Activated CD4-positive, alpha-beta T cell treated with anti-CD3 and anti-CD28 coated beads, Interleukin-2, amount 10 ng/mL, durations not matched to agents 7 days and 5 days (primary cell): ENCODE measurements at regions of chr14 and their contacts with region 1.

Region 1: GRCh38 chr14:22556990-22557623 is 31.9 kb downstream of the DAD1 start:
- DNase-seq: peak; percentile 89
- H3K4me3 Mint-ChIP-seq: peak overlapping the region; percentile 75
- H3K27ac Mint-ChIP-seq: peak overlapping the region; percentile 94
- H3K4me1 Mint-ChIP-seq: peaks cover 86% of the 10 kb centered on the region
- H3K27me3 Mint-ChIP-seq: peaks cover 2% of the 10 kb centered on the region

Region 2: DNA sequence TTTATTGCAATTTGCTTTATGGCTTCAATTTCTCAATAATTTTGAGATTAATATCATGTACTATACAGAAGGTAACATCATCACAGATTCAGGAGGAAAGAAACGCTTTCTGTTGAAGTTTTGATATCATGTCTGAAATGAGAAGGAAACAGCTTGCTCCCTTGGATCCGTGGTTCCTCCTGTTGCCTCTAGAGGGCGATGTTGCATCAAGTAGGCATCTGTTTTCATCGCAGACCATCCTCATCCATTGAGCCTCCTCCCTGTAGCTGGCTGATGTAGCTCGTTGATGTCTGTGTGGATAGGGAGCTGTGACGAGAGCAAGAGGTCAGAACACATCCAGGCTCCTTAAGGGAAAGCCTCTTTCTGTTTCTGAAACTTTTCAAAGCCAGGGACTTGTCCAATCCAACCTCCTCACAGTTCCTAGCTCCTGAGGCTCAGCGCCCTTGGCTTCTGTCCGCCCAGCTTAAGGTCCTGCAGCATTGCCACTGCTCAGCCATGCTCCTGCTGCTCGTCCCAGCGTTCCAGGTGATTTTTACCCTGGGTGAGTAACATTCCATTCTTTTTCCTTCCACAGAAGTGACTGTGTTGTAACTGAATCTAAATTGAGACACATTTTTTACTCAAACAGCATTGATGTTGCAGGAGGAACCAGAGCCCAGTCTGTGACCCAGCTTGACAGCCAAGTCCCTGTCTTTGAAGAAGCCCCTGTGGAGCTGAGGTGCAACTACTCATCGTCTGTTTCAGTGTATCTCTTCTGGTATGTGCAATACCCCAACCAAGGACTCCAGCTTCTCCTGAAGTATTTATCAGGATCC is 578.7 kb before region 1 on chr14:
- CTCF ChIA-PET with region 1: interaction called, 11 read pairs
- POLR2A ChIA-PET with region 1: no interaction called
- DNase-seq: peak; percentile 79
- H3K4me3 Mint-ChIP-seq: peak overlapping the region; percentile 73
- H3K27ac Mint-ChIP-seq: peak overlapping the region; percentile 83
- H3K4me1 Mint-ChIP-seq: peaks cover 38% of the 10 kb centered on the region
- H3K27me3 Mint-ChIP-seq: peaks cover 3% of the 10 kb centered on the region

Region 3: DNA sequence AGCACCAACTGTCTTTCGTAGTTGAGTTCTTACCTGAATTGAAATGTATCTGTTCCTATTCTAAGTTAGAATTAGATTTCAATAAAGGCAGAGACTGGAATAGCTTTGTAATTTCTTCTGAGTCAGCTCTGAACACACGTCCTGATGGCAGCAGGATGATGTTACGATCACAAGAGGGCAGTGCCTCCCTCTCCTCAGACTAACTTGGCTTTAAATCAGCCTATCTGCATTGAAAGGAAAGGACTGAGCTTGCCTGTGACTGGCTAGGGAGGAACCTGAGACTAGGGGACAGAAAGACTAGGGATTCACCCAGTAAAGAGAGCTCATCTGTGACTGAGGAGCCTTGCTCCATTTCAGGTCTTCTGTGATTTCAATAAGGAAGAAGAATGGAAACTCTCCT is 559.8 kb before region 1 on chr14:
- CTCF ChIA-PET with region 1: interaction called, 15 read pairs
- POLR2A ChIA-PET with region 1: interaction called, 4 read pairs
- DNase-seq: peak; percentile 58
- H3K4me3 Mint-ChIP-seq: peak overlapping the region; percentile 83
- H3K27ac Mint-ChIP-seq: peak overlapping the region; percentile 91
- H3K4me1 Mint-ChIP-seq: peaks cover 34% of the 10 kb centered on the region
- H3K27me3 Mint-ChIP-seq: no peaks in the 10 kb centered on the region

Region 4: DNA sequence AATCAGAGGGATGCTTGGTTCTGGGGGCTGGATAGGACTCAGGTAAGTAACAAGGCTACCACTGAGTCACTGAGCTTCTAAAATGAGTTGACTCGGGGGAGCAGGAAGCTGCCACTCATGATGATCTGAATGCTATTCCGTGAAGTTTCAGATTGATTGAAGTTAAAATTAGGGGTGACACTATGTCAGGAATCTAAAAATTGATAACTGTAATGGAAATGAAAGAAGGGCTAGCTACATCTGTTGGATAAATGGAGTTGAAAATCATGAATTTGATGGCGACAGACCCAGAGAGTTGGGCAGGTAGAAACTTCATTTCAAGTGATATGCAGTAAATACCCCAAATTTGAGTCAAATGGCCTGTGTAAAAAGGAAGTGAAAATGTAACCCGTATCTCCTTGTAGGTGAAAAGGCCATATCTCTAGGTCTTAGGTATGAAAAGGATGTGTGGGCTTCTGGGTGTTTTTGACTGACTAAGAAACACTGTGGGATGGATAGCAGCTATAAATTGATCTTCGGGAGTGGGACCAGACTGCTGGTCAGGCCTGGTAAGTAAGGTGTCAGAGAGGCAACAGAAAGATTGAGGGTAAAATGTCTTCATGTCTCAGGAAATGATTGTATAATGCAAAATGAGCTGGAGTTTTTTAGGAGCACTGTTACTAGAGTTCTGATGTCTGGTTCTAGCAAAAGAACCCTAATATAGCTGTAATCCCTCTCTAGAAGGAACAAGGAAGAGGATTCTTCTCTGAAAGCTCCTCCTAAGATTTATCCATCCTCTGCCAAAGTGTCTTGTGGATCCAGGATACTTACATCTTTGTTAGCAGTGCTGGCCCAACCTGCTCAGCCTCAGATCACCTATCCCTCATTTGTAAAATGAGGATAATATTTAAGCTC is 25.4 kb before region 1 on chr14:
- CTCF ChIA-PET with region 1: interaction called, 53 read pairs
- POLR2A ChIA-PET with region 1: interaction called, 7 read pairs
- DNase-seq: no peak
- H3K4me3 Mint-ChIP-seq: peak overlapping the region; percentile 77
- H3K27ac Mint-ChIP-seq: peak overlapping the region; percentile 91
- H3K4me1 Mint-ChIP-seq: peaks cover 89% of the 10 kb centered on the region
- H3K27me3 Mint-ChIP-seq: no peaks in the 10 kb centered on the region

Region 5: GRCh38 chr14:22589096-22589839 is 32.2 kb after region 1 on chr14 and contains the start of gene DAD1:
- CTCF ChIA-PET with region 1: interaction called, 32 read pairs
- POLR2A ChIA-PET with region 1: interaction called, 4 read pairs
- DNase-seq: peak; percentile 100
- H3K4me3 Mint-ChIP-seq: peak within 1 kb of the TSS; percentile 95
- H3K27ac Mint-ChIP-seq: peak within 1 kb of the TSS; percentile 98
- H3K4me1 Mint-ChIP-seq: peaks cover 59% of the 10 kb centered on the region
- H3K27me3 Mint-ChIP-seq: peaks cover 1% of the 10 kb centered on the region
- total RNA-seq, gene DAD1: 169 to 233 TPM

Region 6: GRCh38 chr14:22766456-22767322 is 209.6 kb after region 1 on chr14 and contains the start of gene OXA1L:
- CTCF ChIA-PET with region 1: interaction called, 11 read pairs
- POLR2A ChIA-PET with region 1: no interaction called
- DNase-seq: peak; percentile 99
- H3K4me3 Mint-ChIP-seq: peak within 1 kb of the TSS; percentile 94
- H3K27ac Mint-ChIP-seq: peak within 1 kb of the TSS; percentile 95
- H3K4me1 Mint-ChIP-seq: peaks cover 36% of the 10 kb centered on the region
- H3K27me3 Mint-ChIP-seq: no peaks in the 10 kb centered on the region
- total RNA-seq, gene OXA1L: 122 to 141 TPM

Region 7: GRCh38 chr14:22986508-22987054 is 429.5 kb after region 1 on chr14:
- CTCF ChIA-PET with region 1: interaction called, 10 read pairs
- POLR2A ChIA-PET with region 1: no interaction called
- DNase-seq: peak; percentile 94
- H3K4me3 Mint-ChIP-seq: no peak overlapping the region
- H3K27ac Mint-ChIP-seq: no peak overlapping the region
- H3K4me1 Mint-ChIP-seq: no peaks in the 10 kb centered on the region
- H3K27me3 Mint-ChIP-seq: no peaks in the 10 kb centered on the region